GM13976 (cell line): ENCODE measurements at regions of chr13 and their contacts with region 1.

Region 1: DNA sequence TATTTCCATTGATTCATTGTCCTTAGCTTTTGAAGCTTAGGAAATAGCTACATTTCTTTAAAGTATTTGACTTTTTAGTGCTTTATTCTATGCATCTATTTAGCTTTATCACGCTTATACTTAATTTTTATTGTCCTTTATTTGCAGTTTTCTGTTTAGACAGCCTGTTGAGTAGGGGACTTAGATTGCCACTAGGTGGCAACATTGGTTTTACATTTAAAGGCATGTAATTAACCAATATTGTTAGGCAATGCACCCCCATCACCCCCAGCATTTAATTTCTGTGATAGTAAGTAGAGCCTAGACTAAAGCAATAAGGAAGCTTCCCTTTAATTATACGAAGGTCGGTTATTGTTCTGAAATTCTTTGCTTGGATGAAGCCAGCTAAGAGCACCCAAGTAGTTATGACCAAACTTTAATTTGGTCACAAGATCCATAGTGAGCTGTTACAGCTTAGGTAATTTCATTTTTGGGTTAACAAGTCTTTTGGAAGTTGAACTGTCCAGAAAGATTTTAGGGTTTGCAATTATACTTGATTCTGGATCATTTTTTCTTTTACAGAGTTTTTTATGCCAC is 36.5 kb downstream of the B3GLCT start:
- DNase-seq: peak; percentile 37
- CTCF ChIP-seq: peak; percentile 51

Region 2: DNA sequence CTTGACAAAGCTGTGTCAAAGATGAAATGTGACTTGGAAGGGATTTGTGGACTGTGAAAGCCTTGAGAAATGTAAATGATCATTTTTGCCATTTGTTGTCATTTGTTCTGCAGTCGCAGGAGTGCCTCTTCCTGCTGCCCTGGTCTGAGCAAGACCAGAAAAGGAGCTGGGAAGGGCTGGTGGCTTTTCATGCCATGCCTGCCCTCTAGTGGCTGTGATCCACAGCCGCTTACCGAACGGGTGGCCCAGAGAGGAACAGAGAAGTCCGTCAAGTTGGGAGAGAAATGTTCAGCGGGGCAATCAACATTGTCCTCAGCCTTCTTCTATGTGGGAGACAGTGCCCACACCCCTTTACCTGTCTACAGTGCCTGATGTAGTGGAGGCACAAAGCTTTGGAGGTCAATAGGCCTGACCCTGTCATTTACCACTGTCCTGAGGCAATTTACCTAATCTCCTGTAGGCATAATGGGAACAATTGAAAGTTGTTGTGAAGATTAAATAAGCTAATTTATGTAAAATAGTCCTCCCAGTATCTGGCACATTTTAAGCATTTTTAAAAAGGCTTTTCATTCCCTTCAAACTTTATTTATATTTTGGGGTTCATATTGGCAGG is 187.9 kb after region 1 on chr13:
- in situ Hi-C with region 1: loop called (anchors 10 kb)
- DNase-seq: peak; percentile 60
- CTCF ChIP-seq: peak; percentile 94

Region 3: DNA sequence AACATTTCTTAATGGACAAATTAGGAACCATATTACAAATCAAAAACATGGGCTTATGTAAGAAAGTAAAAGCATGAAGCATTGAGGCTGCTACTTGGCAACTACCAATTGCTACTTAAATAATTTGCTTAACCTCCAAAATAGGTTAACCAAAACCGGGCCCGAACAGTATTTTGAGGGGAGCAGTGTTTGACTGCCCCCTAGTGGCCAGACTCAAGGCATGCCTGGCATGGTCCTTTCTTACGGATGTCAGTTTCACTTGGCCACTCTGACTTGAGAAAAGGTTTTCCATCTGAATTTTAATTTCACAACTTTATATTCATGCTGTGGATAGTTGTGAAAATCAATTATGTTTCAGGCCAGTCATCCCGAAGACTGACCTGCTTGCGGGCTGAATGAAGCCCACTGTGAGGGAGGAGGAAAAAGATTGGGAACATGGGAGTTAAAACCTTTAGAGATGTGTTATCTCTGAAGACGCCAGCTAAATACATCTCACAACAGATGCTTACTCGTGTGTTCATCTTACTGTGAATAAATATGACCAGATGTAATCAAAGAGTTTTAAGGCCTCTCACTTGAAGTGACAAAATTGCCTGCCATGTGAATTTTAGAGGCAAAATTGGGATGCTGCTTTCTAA is 505.9 kb after region 1 on chr13:
- in situ Hi-C with region 1: loop called (anchors 25 kb)
- DNase-seq: peak; percentile 55
- CTCF ChIP-seq: peak; percentile 97